ENCODE measurements at regions of chr2 and their contacts with region 1.

Region 1: DNA sequence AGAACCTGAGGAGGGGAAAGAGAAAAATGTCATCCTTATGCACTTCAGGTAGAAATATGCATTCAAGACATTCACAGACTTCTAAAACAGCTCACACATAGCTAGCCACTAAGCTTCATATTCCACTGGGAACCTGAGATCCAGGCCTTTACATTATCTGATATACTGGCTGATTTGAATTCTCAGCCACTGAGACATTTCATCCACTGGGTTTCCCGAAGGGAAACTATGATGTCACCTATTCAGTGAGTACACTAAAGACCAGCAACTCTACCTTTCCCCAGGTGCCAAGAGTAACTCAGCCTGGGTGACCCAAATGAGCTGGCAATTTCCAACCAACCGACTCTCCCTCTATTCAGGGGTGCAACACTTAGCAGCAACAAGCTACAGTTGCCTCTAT is 21.7 kb upstream of the SP100 start:
- DNase-seq: no peak

Region 2: DNA sequence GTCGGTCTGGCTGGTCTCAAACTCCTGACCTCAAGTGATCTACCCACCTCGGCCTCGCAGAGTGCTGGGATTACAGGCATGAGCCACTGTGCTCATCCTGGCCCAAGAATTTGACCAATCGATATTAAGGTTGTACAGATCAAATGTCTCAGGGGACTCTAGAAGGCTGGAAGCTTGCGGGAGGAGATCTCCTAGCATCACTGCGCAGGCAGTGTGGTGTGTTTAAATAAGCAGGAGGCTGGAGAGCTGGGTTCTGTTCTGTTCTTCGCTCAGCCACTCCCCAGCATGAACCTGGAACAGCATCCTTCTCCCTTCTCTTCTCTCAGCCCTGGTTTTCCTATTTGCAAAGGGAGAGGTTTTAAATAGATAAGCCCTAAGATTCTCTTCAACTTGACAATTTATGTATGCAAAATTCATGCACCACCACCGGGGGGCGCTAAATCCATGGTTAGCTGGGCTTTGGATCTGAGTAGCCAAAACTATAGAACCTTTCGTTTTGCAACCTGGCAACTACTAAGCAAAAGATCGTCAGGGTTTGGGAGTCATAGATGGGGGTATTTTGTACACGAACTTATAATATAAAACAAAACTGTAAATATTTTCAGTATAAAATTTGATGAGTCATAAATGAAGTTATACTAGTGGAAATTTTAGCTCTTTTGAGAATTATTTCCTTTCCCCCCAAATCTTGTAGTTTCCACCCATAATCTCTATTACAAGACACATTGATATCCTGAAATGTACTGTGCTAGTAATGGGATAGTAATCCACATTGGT is 386.2 kb before region 1 on chr2:
- intact Hi-C with region 1: no loop called
- DNase-seq: peak; percentile 82

Region 3: DNA sequence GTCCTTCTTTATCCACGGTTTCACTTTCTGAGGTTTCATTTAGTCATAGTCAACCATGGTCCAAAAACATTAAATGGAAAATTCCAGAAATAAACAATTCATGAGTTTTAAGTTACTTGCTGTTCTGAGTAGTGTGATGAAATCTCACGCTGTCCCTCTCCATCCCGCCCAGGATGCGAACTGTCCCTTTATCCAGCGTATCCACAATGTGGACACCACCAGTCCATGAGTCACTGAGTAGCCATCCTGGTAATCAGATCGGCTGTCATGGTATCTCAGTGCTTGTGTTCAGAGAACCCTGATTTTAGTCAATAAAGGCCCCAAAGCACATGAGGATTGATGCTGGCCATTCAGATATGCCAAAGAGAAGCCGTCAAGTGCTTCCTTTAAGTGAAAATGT is 63.6 kb before region 1 on chr2:
- intact Hi-C with region 1: loop called (anchors 10 kb)
- DNase-seq: no peak